Caco-2 (cell line): ENCODE measurements at regions of chr20 and their contacts with region 1.

Region 1: GRCh38 chr20:45592574-45593189 is 13.6 kb upstream of the WFDC8 start:
- DNase-seq: peak; percentile 66 to 84
- H3K4me3 ChIP-seq: no peak overlapping the region
- H3K4me3 Mint-ChIP-seq: no peak overlapping the region
- H3K27ac Mint-ChIP-seq: no peak overlapping the region
- H3K4me1 ChIP-seq: no peaks in the 10 kb centered on the region
- H3K4me1 Mint-ChIP-seq: peaks cover 6% of the 10 kb centered on the region
- H3K27me3 ChIP-seq: 0 out of 2 replicates have a peak, but pooled peaks cover 3% of the 10 kb centered on the region
- H3K27me3 Mint-ChIP-seq: peaks cover 7% of the 10 kb centered on the region
- CTCF ChIP-seq: peak; percentile 98 to 99

Region 2: DNA sequence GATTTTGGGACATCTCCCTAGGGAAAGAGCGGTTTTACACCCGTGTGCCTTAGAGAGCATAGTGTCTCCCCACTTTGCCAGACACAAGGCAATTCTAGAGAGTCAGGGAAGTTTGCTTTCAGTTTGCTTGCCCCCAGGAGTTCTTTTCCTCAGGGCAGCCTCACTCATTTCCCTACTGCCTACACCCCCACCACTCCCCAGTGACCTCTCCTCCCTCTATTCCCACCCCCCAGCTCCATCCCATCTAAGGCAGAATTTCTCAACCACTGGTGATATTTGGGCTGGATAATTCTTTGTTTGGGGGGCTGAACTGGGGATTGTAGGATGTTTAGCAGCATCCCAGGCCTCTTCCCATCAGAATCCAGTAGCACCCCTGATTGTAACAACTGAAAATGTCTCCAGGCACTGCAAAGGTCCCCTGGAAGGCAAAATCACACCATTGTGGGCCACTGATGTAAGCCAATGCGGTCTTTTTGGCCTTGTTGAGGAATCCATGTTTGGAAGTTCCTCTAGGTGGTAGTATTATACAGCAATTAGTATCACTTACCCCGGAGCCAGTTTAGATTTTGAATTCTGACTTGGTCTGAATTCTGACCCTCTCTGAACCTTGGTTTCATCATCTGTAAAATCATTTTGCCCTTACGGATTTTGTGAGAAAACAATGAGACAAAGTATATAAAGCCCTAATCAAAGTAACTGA is 46.8 kb before region 1 on chr20:
- CTCF ChIA-PET with region 1: interaction called, 3 read pairs
- POLR2A ChIA-PET with region 1: no interaction called
- intact Hi-C with region 1: loop called (anchors 1 kb)
- DNase-seq: peak in 1 of 2 experiments; percentile 69
- H3K4me3 ChIP-seq: no peak overlapping the region
- H3K4me3 Mint-ChIP-seq: no peak overlapping the region
- H3K27ac Mint-ChIP-seq: no peak overlapping the region
- H3K4me1 ChIP-seq: no peaks in the 10 kb centered on the region
- H3K4me1 Mint-ChIP-seq: no peaks in the 10 kb centered on the region
- H3K27me3 ChIP-seq: peaks cover 3% of the 10 kb centered on the region; the same call in 1 of the 2 replicates
- H3K27me3 Mint-ChIP-seq: peaks cover 35% of the 10 kb centered on the region
- CTCF ChIP-seq: peak; percentile 66 to 88

Region 3: DNA sequence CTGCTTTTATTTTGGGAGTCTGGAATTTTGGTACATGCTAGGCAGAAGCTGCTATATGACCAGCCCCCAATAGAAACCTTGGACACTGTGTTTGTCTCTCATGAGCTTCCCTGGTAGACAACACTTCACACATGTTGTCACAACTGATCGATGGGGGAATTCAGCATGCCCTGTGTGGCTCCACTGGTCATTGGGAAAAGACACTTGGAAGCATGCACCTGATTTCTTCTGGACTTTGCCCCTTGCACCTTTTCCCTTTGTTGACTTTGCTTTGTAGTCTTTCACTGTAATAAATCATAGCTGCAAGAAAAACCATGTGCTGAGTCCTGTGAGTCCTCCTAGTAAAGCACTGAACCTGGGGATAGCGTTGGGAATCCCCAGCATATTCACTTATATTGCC is 28.9 kb after region 1 on chr20:
- CTCF ChIA-PET with region 1: interaction called, 3 read pairs
- POLR2A ChIA-PET with region 1: no interaction called
- intact Hi-C with region 1: loop called (anchors 2 kb)
- DNase-seq: peak; percentile 79 to 81
- H3K4me3 ChIP-seq: no peak overlapping the region
- H3K4me3 Mint-ChIP-seq: peak overlapping the region; percentile 2
- H3K27ac Mint-ChIP-seq: no peak overlapping the region
- H3K4me1 ChIP-seq: peaks cover 18% of the 10 kb centered on the region
- H3K4me1 Mint-ChIP-seq: peaks cover 19% of the 10 kb centered on the region
- H3K27me3 ChIP-seq: no peaks in the 10 kb centered on the region
- H3K27me3 Mint-ChIP-seq: no peaks in the 10 kb centered on the region
- CTCF ChIP-seq: no peak

Region 4: GRCh38 chr20:45629496-45630100 is 36.9 kb after region 1 on chr20 and contains the start of gene WFDC10A:
- CTCF ChIA-PET with region 1: interaction called, 5 read pairs
- POLR2A ChIA-PET with region 1: no interaction called
- intact Hi-C with region 1: loop called (anchors 1 kb)
- DNase-seq: peak; percentile 81 to 84
- H3K4me3 ChIP-seq: no peak within 1 kb of the TSS
- H3K4me3 Mint-ChIP-seq: no peak within 1 kb of the TSS
- H3K27ac Mint-ChIP-seq: no peak within 1 kb of the TSS
- H3K4me1 ChIP-seq: no peaks in the 10 kb centered on the region
- H3K4me1 Mint-ChIP-seq: no peaks in the 10 kb centered on the region
- H3K27me3 ChIP-seq: no peaks in the 10 kb centered on the region
- H3K27me3 Mint-ChIP-seq: peaks cover 12% of the 10 kb centered on the region
- CTCF ChIP-seq: peak; percentile 90 to 99
- total RNA-seq, gene WFDC10A: not detected in 2 replicates

Region 5: DNA sequence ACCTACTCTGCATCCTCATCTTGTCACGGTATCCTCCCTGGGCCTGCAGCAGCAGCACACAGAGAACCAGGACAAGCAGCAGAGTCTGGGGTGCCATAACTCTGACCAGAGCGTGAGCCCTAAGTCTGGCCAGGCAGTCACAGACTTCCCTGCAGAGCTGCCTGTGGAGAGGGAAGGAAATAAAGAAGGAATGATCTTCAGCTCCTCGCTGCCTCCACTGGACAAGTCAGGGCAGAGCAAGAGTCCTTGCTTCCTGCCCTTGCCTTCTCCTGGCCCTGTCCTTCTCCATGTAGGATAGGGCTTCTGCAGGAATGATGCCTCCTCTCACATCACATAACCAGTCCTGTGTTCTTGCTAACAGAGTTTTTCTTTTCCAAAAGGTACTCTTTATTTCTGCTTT is 93.2 kb after region 1 on chr20:
- CTCF ChIA-PET with region 1: no interaction called
- POLR2A ChIA-PET with region 1: no interaction called
- intact Hi-C with region 1: loop called (anchors 5 kb)
- DNase-seq: peak; percentile 55 to 57
- H3K4me3 ChIP-seq: no peak overlapping the region
- H3K4me3 Mint-ChIP-seq: no peak overlapping the region
- H3K27ac Mint-ChIP-seq: no peak overlapping the region
- H3K4me1 ChIP-seq: no peaks in the 10 kb centered on the region
- H3K4me1 Mint-ChIP-seq: no peaks in the 10 kb centered on the region
- H3K27me3 ChIP-seq: peaks cover 2% of the 10 kb centered on the region; the same call in 1 of the 2 replicates
- H3K27me3 Mint-ChIP-seq: peaks cover 13% of the 10 kb centered on the region
- CTCF ChIP-seq: peak in 1 of 2 experiments; percentile 52